Vagina (tissue), 2 donors: ENCODE measurements at regions of chr13 and their contacts with region 1.

Region 1: DNA sequence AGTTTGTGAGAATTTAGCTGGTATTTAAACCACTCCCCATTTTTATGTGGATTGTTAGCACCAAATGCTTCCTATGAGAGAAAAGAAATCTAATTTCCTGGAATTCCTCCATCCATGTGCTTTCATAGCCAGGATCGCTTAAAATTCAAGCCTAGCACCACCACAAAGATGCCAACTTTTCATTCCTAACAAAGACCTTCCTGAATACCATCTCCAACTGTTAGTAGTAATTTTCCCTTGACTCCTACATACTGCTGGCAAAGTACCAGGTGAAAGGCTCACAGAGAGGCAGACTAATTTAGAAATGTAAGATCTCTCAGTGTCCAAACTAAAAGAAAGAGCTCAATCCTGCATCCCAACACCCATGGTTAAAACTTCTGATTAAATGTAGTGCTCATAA is 386.3 kb downstream of the KCTD12 start:
- DNase-seq: no peak
- H3K4me3 ChIP-seq: no peak overlapping the region
- H3K27ac ChIP-seq: no peak overlapping the region
- H3K4me1 ChIP-seq: no peaks in the 10 kb centered on the region
- H3K27me3 ChIP-seq: no peaks in the 10 kb centered on the region
- CTCF ChIP-seq: no peak
- POLR2A ChIP-seq: no peak

Region 2: DNA sequence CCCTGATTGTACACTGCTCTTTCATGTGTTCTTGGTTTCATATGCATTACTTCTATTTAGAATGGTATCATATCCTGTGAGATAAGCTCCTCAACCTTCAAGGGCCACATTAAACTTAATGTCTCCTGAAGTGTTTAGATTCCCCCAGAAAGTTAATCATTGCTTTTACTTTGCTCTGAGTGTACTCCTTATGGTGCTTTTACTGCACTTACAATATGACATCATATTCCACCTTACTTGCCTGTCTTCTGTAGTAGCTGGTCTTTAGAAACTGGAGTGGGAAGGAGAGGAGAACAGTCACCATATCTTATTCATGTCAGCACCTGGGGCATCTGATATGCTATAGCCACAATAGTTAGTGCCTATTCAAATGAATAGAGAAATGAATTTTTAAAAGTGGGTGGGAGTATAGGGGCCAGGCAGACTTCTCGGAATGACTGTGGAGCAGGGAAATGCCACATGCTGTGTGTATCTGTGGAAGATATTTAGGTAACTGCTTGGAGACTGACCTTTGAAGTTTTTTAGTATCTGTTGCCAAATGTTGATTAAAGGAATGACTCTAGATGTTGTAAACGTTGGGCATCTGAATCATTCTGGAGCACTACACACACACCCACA is 1237.8 kb after region 1 on chr13:
- intact Hi-C with region 1: loop called (anchors 5 kb)
- DNase-seq: no peak
- H3K4me3 ChIP-seq: no peak overlapping the region
- H3K27ac ChIP-seq: no peak overlapping the region
- H3K4me1 ChIP-seq: no peaks in the 10 kb centered on the region
- H3K27me3 ChIP-seq: no peaks in the 10 kb centered on the region
- CTCF ChIP-seq: no peak
- POLR2A ChIP-seq: no peak